Kidney (tissue), 22 donors: ENCODE measurements at regions of chr19 and their contacts with region 1.

Region 1: DNA sequence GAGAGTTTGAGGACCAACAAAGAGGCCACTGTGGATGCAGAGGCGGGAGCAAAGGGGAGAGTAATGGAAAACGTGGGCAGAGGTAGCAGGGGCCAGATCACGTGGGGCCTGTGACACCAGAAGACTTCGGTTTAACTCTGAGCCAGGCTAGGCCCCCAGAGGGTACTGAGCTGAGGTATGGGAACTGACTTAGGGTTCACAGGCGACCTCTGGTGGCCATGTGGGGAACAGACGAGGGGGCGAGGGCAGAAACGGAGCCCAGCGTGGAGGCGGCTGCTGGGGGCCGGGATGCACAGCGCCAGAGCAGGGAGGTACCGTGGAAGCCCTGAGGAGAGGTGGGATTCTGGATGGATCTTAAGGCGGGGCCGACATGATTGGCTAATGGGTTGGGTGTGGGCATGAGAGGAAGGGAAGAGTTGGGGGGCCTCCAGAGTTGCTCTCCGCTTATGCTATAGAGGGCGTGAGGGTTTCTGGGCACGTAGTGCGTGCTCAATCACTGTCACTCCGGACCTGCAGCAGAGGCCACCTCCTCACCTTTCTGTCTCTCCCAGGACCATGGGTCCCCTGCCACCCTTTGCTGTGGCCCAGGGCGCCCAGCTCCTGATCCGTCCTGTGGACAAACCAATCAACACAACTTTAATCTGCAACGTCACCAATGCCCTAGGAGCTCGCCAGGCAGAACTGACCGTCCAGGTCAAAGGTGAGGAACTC is 13.7 kb downstream of the PVR start:
- DNase-seq: peak; percentile 70 to 84 (median 78)
- H3K4me3 ChIP-seq: no peak overlapping the region
- H3K27ac ChIP-seq: no peak overlapping the region
- H3K4me1 ChIP-seq: peaks cover 0 to 2% (median 1%) of the 10 kb centered on the region in 3 donors
- H3K27me3 ChIP-seq: no peaks in the 10 kb centered on the region
- CTCF ChIP-seq: peak; percentile 94

Region 2: DNA sequence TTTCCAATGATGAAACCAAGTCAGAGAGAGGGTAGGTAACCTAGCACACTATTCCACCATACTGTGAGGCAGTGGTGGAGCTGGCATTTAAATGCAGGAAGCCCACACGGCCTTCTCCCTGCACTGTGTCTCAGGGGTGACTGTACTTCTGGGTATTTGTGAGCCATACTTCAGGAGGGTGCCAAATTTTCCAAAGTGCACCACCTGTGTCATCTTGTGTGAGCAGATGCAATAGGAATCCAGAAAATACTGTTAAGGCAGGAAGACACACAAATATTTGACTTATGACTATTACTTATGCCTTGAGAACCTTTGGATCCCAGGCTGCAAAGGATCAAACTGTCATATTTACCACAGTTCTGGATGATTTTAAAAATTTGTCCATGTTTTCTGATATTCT is 226.4 kb before region 1 on chr19:
- intact Hi-C with region 1: no loop called
- DNase-seq: no peak
- H3K4me3 ChIP-seq: peak overlapping the region in 1 of 3 donors; percentile 29
- H3K27ac ChIP-seq: no peak overlapping the region
- H3K4me1 ChIP-seq: no peaks in the 10 kb centered on the region
- H3K27me3 ChIP-seq: no peaks in the 10 kb centered on the region
- CTCF ChIP-seq: no peak

Region 3: GRCh38 chr19:44570984-44571684 is 86.2 kb before region 1 on chr19:
- intact Hi-C with region 1: loop called (anchors 5 kb)
- DNase-seq: peak in 4 of 5 donors; percentile 81 to 95 (median 86)
- H3K4me3 ChIP-seq: no peak overlapping the region
- H3K27ac ChIP-seq: no peak overlapping the region
- H3K4me1 ChIP-seq: peaks cover 5 to 6% (median 6%) of the 10 kb centered on the region in 3 donors
- H3K27me3 ChIP-seq: no peaks in the 10 kb centered on the region
- CTCF ChIP-seq: peak; percentile 67

Region 4: GRCh38 chr19:45079063-45079910 is 421.9 kb after region 1 on chr19 and contains the start of gene GEMIN7:
- intact Hi-C with region 1: no loop called
- DNase-seq: peak; percentile 73 to 90 (median 84)
- H3K4me3 ChIP-seq: peak within 1 kb of the TSS; percentile 72 to 90 (median 89)
- H3K27ac ChIP-seq: peak within 1 kb of the TSS; percentile 6 to 17
- H3K4me1 ChIP-seq: peaks cover 0 to 19% (median 12%) of the 10 kb centered on the region in 3 donors
- H3K27me3 ChIP-seq: no peaks in the 10 kb centered on the region
- CTCF ChIP-seq: no peak
- total RNA-seq, gene GEMIN7: 17.2 TPM